ENCODE measurements at regions of chr18 and their contacts with region 1.

Region 1: GRCh38 chr18:45671336-45671735 is 52.6 kb upstream of the SLC14A1 start:
- DNase-seq: no peak
- ATAC-seq: no peak
- H3K4me3 Mint-ChIP-seq: no peak overlapping the region
- H3K27ac Mint-ChIP-seq: no peak overlapping the region
- H3K4me1 Mint-ChIP-seq: peaks cover 55% of the 10 kb centered on the region
- H3K27me3 Mint-ChIP-seq: no peaks in the 10 kb centered on the region

Region 2: GRCh38 chr18:45690975-45691815 is 19.9 kb after region 1 on chr18:
- CTCF ChIA-PET with region 1: interaction called, 234 read pairs
- DNase-seq: peak; percentile 84
- ATAC-seq: no peak
- H3K4me3 Mint-ChIP-seq: no peak overlapping the region
- H3K27ac Mint-ChIP-seq: no peak overlapping the region
- H3K4me1 Mint-ChIP-seq: peaks cover 51% of the 10 kb centered on the region
- H3K27me3 Mint-ChIP-seq: peaks cover 5% of the 10 kb centered on the region

Measured in activated CD8-positive, alpha-beta memory T cell treated with anti-CD3 and anti-CD28 coated beads, Interleukin-2, amount 10 ng/mL, durations not matched to agents 7 days and 5 days (primary cell).